ENCODE measurements at regions of chr4 and their contacts with region 1.

Region 1: GRCh38 chr4:99808260-99808857 is 8.3 kb upstream of the DAPP1 start:
- DNase-seq: peak; percentile 45 to 80 (median 63)
- ATAC-seq: peak; percentile 94 to 99 (median 94)
- H3K4me3 ChIP-seq: no peak overlapping the region
- H3K4me3 Mint-ChIP-seq: no peak overlapping the region
- H3K27ac ChIP-seq: no peak overlapping the region
- H3K27ac Mint-ChIP-seq: no peak overlapping the region
- H3K4me1 ChIP-seq: no peaks in the 10 kb centered on the region
- H3K4me1 Mint-ChIP-seq: peaks cover 0 to 4% (median 0%) of the 10 kb centered on the region in 3 donors
- H3K27me3 ChIP-seq: peaks cover 0 to 6% of the 10 kb centered on the region in 2 experiments
- H3K27me3 Mint-ChIP-seq: peaks cover 0 to 2% of the 10 kb centered on the region in 2 donors

Region 2: DNA sequence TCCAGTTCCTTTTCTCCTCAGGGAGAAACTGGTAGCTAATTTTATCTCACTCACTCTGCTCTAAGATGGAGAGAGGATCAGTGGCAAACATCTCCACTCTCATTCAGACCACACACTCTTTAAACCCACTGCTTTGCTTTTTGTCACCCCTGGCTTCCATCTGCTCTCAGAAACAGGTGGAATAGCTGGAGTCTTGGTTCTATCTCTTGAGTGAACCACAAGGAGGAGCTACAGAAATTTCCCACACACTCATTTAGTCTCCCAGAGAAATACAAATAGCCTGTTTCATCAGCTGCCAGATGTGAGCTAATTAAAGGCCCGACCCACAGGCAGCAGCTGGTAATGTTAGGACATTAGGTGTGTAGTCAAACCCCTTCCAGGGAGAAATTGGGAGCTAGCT is 1761.7 kb before region 1 on chr4:
- CTCF ChIA-PET with region 1: no interaction called
- POLR2A ChIA-PET with region 1: no interaction called
- DNase-seq: no peak
- ATAC-seq: no peak
- H3K4me3 ChIP-seq: no peak overlapping the region
- H3K4me3 Mint-ChIP-seq: no peak overlapping the region
- H3K27ac ChIP-seq: no peak overlapping the region
- H3K27ac Mint-ChIP-seq: no peak overlapping the region
- H3K4me1 ChIP-seq: no peaks in the 10 kb centered on the region
- H3K4me1 Mint-ChIP-seq: no peaks in the 10 kb centered on the region
- H3K27me3 ChIP-seq: no peaks in the 10 kb centered on the region
- H3K27me3 Mint-ChIP-seq: peaks cover 4 to 5% of the 10 kb centered on the region in 2 donors

Region 3: GRCh38 chr4:99563310-99564186 is 244.8 kb before region 1 on chr4 and contains the start of gene TRMT10A:
- CTCF ChIA-PET with region 1: interaction called, 8 to 27 read pairs
- POLR2A ChIA-PET with region 1: interaction called in 1 of 2 experiments, 4 read pairs
- DNase-seq: peak; percentile 86 to 99 (median 97)
- ATAC-seq: peak; percentile 88 to 93 (median 92)
- H3K4me3 ChIP-seq: peak within 1 kb of the TSS; percentile 80 to 91
- H3K4me3 Mint-ChIP-seq: peak within 1 kb of the TSS; percentile 86 to 99 (median 98)
- H3K27ac ChIP-seq: peak within 1 kb of the TSS; percentile 99
- H3K27ac Mint-ChIP-seq: peak within 1 kb of the TSS; percentile 99 to 100
- H3K4me1 ChIP-seq: peaks cover 2 to 12% of the 10 kb centered on the region in 2 experiments
- H3K4me1 Mint-ChIP-seq: peaks cover 17 to 26% (median 20%) of the 10 kb centered on the region in 3 donors
- H3K27me3 ChIP-seq: peaks cover 4 to 5% of the 10 kb centered on the region in 2 experiments
- H3K27me3 Mint-ChIP-seq: peaks cover 24 to 25% of the 10 kb centered on the region in 2 donors
- total RNA-seq, gene TRMT10A: 3.4 to 5.3 (median 4.0) TPM

Region 4: DNA sequence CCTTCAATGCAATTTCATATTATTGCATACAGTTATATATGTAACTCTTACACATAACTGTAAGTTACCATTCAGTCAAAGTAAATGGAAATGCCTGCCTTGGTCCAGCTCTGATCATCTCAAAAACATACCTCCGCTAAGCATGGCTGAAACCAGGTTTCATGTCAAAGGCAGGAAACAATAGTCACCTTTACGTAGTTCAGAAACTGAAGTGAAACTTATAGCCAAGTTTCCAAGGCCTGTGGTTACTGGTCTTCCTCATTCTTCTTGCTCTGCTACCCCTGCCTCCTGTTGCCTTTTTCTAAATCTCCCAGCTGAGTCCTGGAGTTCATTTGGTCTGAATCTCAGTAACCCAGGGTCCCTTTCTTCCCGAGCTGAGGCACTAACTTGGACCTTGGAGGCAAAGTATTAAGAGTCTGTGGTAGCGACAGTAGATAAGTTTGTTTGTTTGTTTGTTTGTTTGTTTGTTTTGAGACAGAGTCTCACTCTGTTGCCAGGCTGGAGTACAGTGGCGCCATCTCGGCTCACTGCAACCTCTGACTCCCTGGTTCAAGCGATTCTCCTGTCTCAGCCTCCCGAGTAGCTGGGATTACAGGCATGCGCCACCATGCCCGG is 39.1 kb after region 1 on chr4:
- CTCF ChIA-PET with region 1: interaction called, 3 to 12 read pairs
- POLR2A ChIA-PET with region 1: no interaction called
- DNase-seq: peak in 1 of 35 experiments; percentile 49
- ATAC-seq: peak in 3 of 4 experiments; percentile 44 to 60 (median 59)
- H3K4me3 ChIP-seq: no peak overlapping the region
- H3K4me3 Mint-ChIP-seq: peak overlapping the region; percentile 43 to 61 (median 50)
- H3K27ac ChIP-seq: peak overlapping the region; percentile 62
- H3K27ac Mint-ChIP-seq: peak overlapping the region; percentile 86 to 95
- H3K4me1 ChIP-seq: peaks cover 28 to 33% of the 10 kb centered on the region in 2 experiments
- H3K4me1 Mint-ChIP-seq: peaks cover 43 to 64% (median 51%) of the 10 kb centered on the region in 3 donors
- H3K27me3 ChIP-seq: no peaks in the 10 kb centered on the region
- H3K27me3 Mint-ChIP-seq: no peaks in the 10 kb centered on the region

Region 5: GRCh38 chr4:99868126-99868596 is 59.8 kb after region 1 on chr4:
- CTCF ChIA-PET with region 1: no interaction called
- POLR2A ChIA-PET with region 1: interaction called in 1 of 2 experiments, 14 read pairs
- DNase-seq: no peak
- ATAC-seq: no peak
- H3K4me3 ChIP-seq: no peak overlapping the region
- H3K4me3 Mint-ChIP-seq: no peak overlapping the region
- H3K27ac ChIP-seq: no peak overlapping the region
- H3K27ac Mint-ChIP-seq: no peak overlapping the region
- H3K4me1 ChIP-seq: no peaks in the 10 kb centered on the region
- H3K4me1 Mint-ChIP-seq: no peaks in the 10 kb centered on the region
- H3K27me3 ChIP-seq: no peaks in the 10 kb centered on the region
- H3K27me3 Mint-ChIP-seq: no peaks in the 10 kb centered on the region

Region 6: GRCh38 chr4:99885063-99885664 is 76.8 kb after region 1 on chr4:
- CTCF ChIA-PET with region 1: interaction called, 12 to 17 read pairs
- POLR2A ChIA-PET with region 1: no interaction called
- DNase-seq: peak in 19 of 35 experiments; percentile 2 to 73 (median 21)
- ATAC-seq: peak in 1 of 4 experiments; percentile 64
- H3K4me3 ChIP-seq: no peak overlapping the region
- H3K4me3 Mint-ChIP-seq: no peak overlapping the region
- H3K27ac ChIP-seq: no peak overlapping the region
- H3K27ac Mint-ChIP-seq: no peak overlapping the region
- H3K4me1 ChIP-seq: no peaks in the 10 kb centered on the region
- H3K4me1 Mint-ChIP-seq: peaks cover 0 to 16% (median 12%) of the 10 kb centered on the region in 3 donors
- H3K27me3 ChIP-seq: no peaks in the 10 kb centered on the region
- H3K27me3 Mint-ChIP-seq: no peaks in the 10 kb centered on the region